GM10248 (cell line): ENCODE measurements at regions of chr9 and their contacts with region 1.

Region 1: DNA sequence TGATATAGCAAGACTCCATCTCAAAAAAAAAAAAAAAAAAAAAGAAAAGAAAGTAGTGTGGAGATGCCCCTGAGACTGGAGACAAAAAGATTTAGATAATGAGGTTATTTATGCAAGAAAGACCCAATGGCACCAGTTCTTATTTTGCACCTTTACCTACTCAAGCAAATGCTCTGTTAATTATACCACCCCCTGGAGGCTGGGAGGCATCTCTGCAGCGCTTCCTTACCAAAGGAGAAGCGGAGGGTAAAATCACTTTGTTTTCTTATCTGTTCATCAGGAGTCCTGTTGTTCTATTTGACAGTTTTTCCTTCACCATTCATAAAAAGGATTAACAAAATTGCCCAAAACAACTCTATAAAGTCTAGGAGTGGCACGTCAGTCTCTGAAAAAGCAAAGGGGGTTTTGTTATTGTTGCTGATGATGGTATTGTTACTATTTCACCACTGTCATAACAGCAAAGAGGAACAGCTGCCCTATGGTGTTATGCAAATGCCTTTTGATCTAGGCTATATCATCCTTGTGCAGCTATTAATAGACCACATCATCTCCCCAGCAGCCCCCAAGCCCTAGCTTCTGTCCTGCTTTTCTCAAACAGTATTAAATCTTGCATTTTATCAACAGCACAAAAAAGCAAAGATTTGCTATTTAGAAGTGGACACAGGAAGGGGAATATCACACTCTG is 174.0 kb downstream of the PALM2AKAP2 start:
- DNase-seq: no peak
- CTCF ChIP-seq: no peak

Region 2: GRCh38 chr9:109972026-109972882 is 18.3 kb after region 1 on chr9:
- CTCF ChIA-PET with region 1: interaction called, 46 read pairs
- POLR2A ChIA-PET with region 1: no interaction called
- DNase-seq: peak; percentile 37
- CTCF ChIP-seq: no peak